Activated CD4-positive, alpha-beta T cell treated with anti-CD3 and anti-CD28 coated beads, Interleukin-2, amount 10 ng/mL, durations not matched to agents 24 days and 14 days (primary cell): ENCODE measurements at regions of chr19 and their contacts with region 1.

Region 1: GRCh38 chr19:15511671-15512424 is 3.5 kb downstream of the CYP4F22 start:
- DNase-seq: no peak
- H3K4me3 Mint-ChIP-seq: no peak overlapping the region
- H3K27ac Mint-ChIP-seq: no peak overlapping the region
- H3K4me1 Mint-ChIP-seq: peaks cover 22% of the 10 kb centered on the region
- H3K27me3 Mint-ChIP-seq: peaks cover 30% of the 10 kb centered on the region

Region 2: GRCh38 chr19:15532779-15533521 is 21.1 kb after region 1 on chr19:
- intact Hi-C with region 1: loop called (anchors 2 kb)
- DNase-seq: no peak
- H3K4me3 Mint-ChIP-seq: peak overlapping the region; percentile 20
- H3K27ac Mint-ChIP-seq: peak overlapping the region; percentile 42
- H3K4me1 Mint-ChIP-seq: peaks cover 31% of the 10 kb centered on the region
- H3K27me3 Mint-ChIP-seq: peaks cover 4% of the 10 kb centered on the region